Activated CD8-positive, alpha-beta T cell treated with anti-CD3 and anti-CD28 coated beads for 36 hours (primary cell): ENCODE measurements at regions of chr2 and their contacts with region 1.

Region 1: DNA sequence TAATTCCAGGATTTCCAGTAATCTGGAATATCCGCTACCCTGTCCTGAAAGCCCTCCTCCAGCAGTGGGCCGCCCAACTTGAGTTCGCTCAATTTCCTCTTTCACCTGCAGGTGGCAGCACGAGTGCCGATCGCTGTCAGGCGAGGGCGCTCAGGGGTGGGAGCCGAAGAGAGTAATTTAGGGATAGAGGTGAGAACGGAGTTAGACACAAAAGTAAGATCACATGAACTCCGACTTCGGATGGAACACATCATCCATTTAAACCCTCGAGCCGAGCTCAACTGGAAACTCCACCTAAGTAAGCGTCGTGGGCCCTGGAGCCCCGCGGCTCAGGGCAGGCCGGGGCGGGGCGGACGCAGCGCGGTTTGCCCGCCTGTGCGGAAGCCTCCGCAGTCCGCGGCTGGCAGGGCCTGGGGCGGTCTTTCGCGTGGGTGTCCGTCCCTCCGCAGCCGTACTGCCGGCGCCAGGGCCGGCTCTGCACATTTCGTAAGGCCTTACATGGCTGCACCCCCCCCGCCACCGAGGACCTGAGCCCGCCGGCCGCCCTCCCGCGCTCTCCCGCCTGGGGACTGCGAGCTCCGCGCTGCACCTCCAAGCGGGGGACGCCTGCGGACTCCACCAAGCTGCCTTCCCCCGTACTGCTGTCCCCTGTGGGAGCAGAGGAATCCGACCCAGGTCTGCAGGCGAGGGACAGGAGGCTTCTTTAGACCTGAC is 61.2 kb downstream of the SEMA4F start:
- DNase-seq: peak; percentile 88
- ATAC-seq: peak; percentile 92
- H3K4me3 Mint-ChIP-seq: peak overlapping the region; percentile 79
- H3K27ac Mint-ChIP-seq: no peak overlapping the region
- H3K4me1 Mint-ChIP-seq: peaks cover 3% of the 10 kb centered on the region
- H3K27me3 Mint-ChIP-seq: peaks cover 10% of the 10 kb centered on the region
- CTCF ChIP-seq: peak; percentile 90

Region 2: DNA sequence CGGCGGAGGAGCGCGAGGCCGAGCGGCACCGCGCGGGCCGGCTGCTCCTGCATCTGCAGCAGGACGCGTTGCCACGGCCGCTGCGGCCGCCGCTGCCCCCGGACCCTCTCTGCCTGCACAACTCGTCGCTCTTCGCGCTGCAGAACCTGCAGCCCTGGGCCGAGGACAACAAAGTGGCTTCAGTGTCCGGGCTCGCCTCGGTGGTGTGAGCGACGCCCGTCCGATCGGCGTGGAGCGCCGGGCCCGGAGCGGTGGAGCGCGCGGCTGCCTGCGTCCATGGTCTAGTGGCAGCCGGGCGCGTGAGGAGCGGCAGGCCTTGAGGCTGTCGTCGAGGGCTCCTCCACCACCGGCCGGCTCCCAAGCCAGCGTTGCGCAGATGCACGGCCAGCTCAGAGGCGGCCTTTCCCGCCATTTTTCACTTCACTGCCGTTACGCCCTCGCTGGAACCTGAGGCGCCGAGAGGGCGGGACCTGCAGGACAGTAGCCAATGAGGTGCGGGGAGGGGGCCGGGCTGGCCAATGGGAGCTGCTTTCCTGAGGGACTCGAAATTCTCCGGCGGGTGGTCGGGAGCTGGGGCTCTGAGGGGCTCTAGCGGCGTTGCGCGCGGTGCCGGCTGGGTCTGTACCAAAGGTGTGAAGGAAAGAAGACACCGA is 199.1 kb before region 1 on chr2:
- CTCF ChIA-PET with region 1: no interaction called
- POLR2A ChIA-PET with region 1: no interaction called
- intact Hi-C with region 1: no loop called
- DNase-seq: peak; percentile 80
- ATAC-seq: peak; percentile 80
- H3K4me3 Mint-ChIP-seq: peak overlapping the region; percentile 42
- H3K27ac Mint-ChIP-seq: no peak overlapping the region
- H3K4me1 Mint-ChIP-seq: peaks cover 26% of the 10 kb centered on the region
- H3K27me3 Mint-ChIP-seq: peaks cover 66% of the 10 kb centered on the region
- CTCF ChIP-seq: no peak

Region 3: GRCh38 chr2:74688881-74689280 is 26.4 kb before region 1 on chr2:
- CTCF ChIA-PET with region 1: interaction called, 16 read pairs
- POLR2A ChIA-PET with region 1: no interaction called
- intact Hi-C with region 1: no loop called
- DNase-seq: no peak
- ATAC-seq: no peak
- H3K4me3 Mint-ChIP-seq: no peak overlapping the region
- H3K27ac Mint-ChIP-seq: no peak overlapping the region
- H3K4me1 Mint-ChIP-seq: no peaks in the 10 kb centered on the region
- H3K27me3 Mint-ChIP-seq: no peaks in the 10 kb centered on the region
- CTCF ChIP-seq: no peak

Region 4: DNA sequence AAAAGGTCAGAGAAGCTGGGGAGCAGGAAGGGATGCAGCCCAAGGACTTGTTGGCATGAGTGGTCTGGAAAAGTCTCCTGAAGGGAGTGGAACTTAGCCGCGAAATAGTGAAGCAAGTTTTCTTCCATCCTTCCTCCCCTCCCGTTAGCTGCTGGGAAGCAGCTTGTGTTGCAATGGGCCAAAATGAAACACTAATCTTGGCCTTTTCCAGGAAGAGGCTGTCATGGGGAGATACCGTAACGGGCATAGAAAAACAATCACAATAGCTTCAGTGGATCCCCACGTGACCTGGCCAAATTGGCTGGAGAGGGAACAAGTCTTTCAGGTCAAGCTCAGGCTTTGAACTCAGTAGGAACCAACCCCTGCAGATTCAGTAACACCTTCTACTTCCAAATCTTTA is 11.9 kb before region 1 on chr2:
- CTCF ChIA-PET with region 1: interaction called, 33 read pairs
- POLR2A ChIA-PET with region 1: interaction called, 4 read pairs
- intact Hi-C with region 1: no loop called
- DNase-seq: no peak
- ATAC-seq: no peak
- H3K4me3 Mint-ChIP-seq: no peak overlapping the region
- H3K27ac Mint-ChIP-seq: no peak overlapping the region
- H3K4me1 Mint-ChIP-seq: no peaks in the 10 kb centered on the region
- H3K27me3 Mint-ChIP-seq: no peaks in the 10 kb centered on the region
- CTCF ChIP-seq: no peak

Region 5: GRCh38 chr2:74725287-74725686 is 10.1 kb after region 1 on chr2:
- CTCF ChIA-PET with region 1: interaction called, 16 read pairs
- POLR2A ChIA-PET with region 1: interaction called, 5 read pairs
- intact Hi-C with region 1: no loop called
- DNase-seq: no peak
- ATAC-seq: no peak
- H3K4me3 Mint-ChIP-seq: no peak overlapping the region
- H3K27ac Mint-ChIP-seq: no peak overlapping the region
- H3K4me1 Mint-ChIP-seq: no peaks in the 10 kb centered on the region
- H3K27me3 Mint-ChIP-seq: peaks cover 7% of the 10 kb centered on the region
- CTCF ChIP-seq: no peak

Region 6: DNA sequence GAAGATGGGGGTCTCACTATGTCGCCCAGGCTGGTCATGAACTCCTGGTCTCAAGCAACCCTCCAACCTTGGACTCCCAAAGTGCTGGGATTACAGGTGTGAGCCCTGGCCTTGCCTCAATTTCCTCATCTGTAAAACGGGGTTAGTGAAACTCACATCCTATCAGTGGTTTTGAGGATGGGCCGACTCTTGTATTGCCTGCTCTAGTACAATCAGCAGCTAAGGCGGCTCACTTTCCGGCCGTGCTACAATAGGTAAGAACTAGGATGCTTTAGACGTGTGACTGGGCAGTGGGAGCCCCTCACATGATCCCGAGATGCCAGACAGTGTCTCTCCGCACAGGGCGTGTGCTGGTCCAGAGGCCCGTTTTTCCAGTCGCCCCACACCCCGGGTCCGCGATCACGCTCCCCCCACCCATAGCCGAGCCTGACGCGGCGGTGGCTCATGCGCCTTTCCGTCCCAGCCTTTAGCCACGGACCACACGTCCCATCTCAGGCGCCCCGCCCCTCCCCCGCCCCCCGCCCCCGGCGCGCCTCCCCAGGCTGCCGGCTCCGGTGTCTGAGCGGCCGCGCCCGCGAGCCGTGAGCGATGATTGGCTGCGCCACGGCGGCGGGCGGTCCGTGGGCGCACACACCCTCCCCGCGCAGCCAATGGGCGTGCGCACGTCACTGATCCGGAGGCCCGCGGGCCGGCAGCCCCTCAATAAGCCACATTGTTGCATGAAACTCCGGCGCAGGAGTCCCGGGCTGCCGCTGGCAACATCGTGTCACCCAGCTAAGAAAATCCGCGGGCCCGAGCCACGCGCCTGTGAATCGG is 118.4 kb after region 1 on chr2 and contains the start of gene HK2:
- CTCF ChIA-PET with region 1: interaction called, 10 read pairs
- POLR2A ChIA-PET with region 1: no interaction called
- intact Hi-C with region 1: no loop called
- DNase-seq: peak; percentile 90
- ATAC-seq: peak; percentile 90
- H3K4me3 Mint-ChIP-seq: peak within 1 kb of the TSS; percentile 95
- H3K27ac Mint-ChIP-seq: peak within 1 kb of the TSS; percentile 93
- H3K4me1 Mint-ChIP-seq: peaks cover 42% of the 10 kb centered on the region
- H3K27me3 Mint-ChIP-seq: peaks cover 3% of the 10 kb centered on the region
- CTCF ChIP-seq: no peak
- total RNA-seq, gene HK2: 121 to 124 TPM

Region 7: DNA sequence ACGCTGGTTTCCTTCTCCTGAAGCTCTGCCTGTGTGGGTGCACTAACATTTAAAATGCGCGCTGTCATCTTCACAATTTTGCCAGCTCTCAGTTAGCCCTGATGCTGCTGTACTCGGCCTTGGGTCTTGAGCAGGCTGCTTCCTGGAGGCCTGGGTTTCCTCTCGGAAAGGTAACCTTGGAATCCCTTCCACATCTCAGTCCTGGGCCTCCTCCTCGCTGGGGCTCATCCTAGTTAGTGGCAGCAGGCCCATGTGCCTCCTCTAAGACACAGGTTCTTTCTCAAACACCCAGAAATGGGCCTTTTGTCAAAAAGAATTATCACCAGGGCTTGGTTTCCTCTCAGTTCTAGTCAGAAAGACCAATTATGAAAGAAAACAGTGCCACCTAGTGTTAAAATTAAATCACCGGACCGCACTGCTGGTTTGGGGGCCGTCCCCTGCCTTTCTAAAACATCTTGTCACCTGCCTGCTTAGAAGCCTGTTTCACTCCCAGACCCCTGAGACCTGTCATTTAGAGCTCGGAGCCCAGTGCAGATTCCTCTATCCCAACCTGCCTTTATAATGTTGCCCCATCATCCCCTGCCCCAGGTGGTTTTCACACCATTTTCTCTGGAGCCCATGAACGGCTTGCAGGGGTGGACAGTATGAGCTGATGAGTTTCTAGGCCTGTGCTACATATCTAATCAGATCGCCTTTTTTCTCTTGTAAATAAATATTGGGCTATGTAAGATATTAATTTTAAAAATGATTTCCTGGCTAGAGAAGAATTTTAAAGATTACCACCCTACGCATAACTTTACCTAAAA is 161.0 kb after region 1 on chr2:
- CTCF ChIA-PET with region 1: interaction called, 65 read pairs
- POLR2A ChIA-PET with region 1: interaction called, 4 read pairs
- intact Hi-C with region 1: loop called (anchors 2 kb)
- DNase-seq: peak; percentile 54
- ATAC-seq: peak; percentile 67
- H3K4me3 Mint-ChIP-seq: no peak overlapping the region
- H3K27ac Mint-ChIP-seq: no peak overlapping the region
- H3K4me1 Mint-ChIP-seq: no peaks in the 10 kb centered on the region
- H3K27me3 Mint-ChIP-seq: no peaks in the 10 kb centered on the region
- CTCF ChIP-seq: peak; percentile 63